PC-9 (cell line): ENCODE measurements at regions of chr10 and their contacts with region 1.

Region 1: GRCh38 chr10:29998142-29998808 is 61.1 kb downstream of the JCAD start:
- DNase-seq: peak; percentile 61 to 75
- H3K4me3 ChIP-seq: no peak overlapping the region
- H3K27ac ChIP-seq: no peak overlapping the region
- H3K4me1 ChIP-seq: peaks cover 42% of the 10 kb centered on the region
- H3K27me3 ChIP-seq: no peaks in the 10 kb centered on the region
- CTCF ChIP-seq: peak; percentile 92

Region 2: GRCh38 chr10:29735596-29736318 is 262.5 kb before region 1 on chr10:
- CTCF ChIA-PET with region 1: no interaction called
- POLR2A ChIA-PET with region 1: interaction called, 5 read pairs
- intact Hi-C with region 1: loop called (anchors 1 kb)
- DNase-seq: peak; percentile 64 to 97
- H3K4me3 ChIP-seq: peak overlapping the region; percentile 73
- H3K27ac ChIP-seq: peak overlapping the region; percentile 93
- H3K4me1 ChIP-seq: peaks cover 22% of the 10 kb centered on the region
- H3K27me3 ChIP-seq: no peaks in the 10 kb centered on the region
- CTCF ChIP-seq: peak; percentile 84

Region 3: DNA sequence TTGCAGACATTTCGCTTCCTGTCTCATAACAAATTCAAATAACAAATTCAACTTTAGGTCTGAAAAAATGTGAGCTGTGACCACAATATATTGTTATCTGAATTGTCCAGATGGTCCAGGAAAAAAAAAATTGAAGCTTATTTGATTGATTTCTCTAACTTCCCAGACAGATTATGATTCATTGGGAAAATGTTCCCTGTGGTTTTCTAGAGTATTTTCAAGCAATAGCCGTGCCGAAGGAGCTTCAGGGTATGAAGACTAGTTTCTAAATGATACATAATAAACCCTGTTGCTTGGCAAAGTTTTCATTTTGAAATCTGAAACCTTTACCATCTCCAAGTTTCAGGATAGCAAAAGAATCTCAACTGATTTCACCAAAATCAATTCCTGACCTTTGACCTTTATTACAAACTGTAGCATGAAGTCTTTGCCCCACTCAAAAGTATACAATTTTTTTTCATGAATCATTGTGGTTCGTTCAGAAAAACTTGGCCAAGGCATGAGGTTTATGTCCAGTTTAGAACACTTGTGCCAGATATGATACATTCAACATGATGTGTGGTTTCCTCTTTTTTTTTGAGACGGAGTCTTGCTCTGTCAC is 48.8 kb before region 1 on chr10:
- CTCF ChIA-PET with region 1: no interaction called
- POLR2A ChIA-PET with region 1: no interaction called
- intact Hi-C with region 1: loop called (anchors 2 kb)
- DNase-seq: peak; percentile 44 to 96
- H3K4me3 ChIP-seq: no peak overlapping the region
- H3K27ac ChIP-seq: peak overlapping the region; percentile 91
- H3K4me1 ChIP-seq: peaks cover 51% of the 10 kb centered on the region
- H3K27me3 ChIP-seq: no peaks in the 10 kb centered on the region
- CTCF ChIP-seq: no peak

Region 4: DNA sequence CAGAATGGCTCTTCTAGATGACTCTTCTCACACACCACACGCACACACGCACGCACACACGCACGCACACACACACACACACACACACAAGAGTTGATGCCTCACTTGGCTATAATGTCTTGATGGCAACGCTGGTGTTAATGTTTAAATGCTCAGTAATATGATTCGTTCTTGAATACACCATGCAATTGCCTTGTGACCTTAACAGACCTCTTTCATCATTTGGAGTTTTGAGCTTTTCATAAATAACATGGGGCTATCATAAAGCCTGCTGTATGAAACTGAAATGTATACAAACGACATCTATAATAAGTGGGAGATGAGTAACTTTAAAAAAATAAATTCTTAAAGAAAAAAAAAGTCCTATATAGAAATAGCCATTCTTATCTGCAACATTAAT is 52.9 kb after region 1 on chr10:
- CTCF ChIA-PET with region 1: no interaction called
- POLR2A ChIA-PET with region 1: no interaction called
- intact Hi-C with region 1: no loop called
- DNase-seq: no peak
- H3K4me3 ChIP-seq: no peak overlapping the region
- H3K27ac ChIP-seq: no peak overlapping the region
- H3K4me1 ChIP-seq: peaks cover 9% of the 10 kb centered on the region
- H3K27me3 ChIP-seq: no peaks in the 10 kb centered on the region
- CTCF ChIP-seq: no peak

Region 5: GRCh38 chr10:30241422-30242110 is 243.3 kb after region 1 on chr10:
- CTCF ChIA-PET with region 1: interaction called, 10 read pairs
- POLR2A ChIA-PET with region 1: interaction called, 3 read pairs
- intact Hi-C with region 1: loop called (anchors 1 kb)
- DNase-seq: no peak
- H3K4me3 ChIP-seq: no peak overlapping the region
- H3K27ac ChIP-seq: no peak overlapping the region
- H3K4me1 ChIP-seq: no peaks in the 10 kb centered on the region
- H3K27me3 ChIP-seq: no peaks in the 10 kb centered on the region
- CTCF ChIP-seq: no peak; the same call in 1 of the 2 replicates

Region 6: DNA sequence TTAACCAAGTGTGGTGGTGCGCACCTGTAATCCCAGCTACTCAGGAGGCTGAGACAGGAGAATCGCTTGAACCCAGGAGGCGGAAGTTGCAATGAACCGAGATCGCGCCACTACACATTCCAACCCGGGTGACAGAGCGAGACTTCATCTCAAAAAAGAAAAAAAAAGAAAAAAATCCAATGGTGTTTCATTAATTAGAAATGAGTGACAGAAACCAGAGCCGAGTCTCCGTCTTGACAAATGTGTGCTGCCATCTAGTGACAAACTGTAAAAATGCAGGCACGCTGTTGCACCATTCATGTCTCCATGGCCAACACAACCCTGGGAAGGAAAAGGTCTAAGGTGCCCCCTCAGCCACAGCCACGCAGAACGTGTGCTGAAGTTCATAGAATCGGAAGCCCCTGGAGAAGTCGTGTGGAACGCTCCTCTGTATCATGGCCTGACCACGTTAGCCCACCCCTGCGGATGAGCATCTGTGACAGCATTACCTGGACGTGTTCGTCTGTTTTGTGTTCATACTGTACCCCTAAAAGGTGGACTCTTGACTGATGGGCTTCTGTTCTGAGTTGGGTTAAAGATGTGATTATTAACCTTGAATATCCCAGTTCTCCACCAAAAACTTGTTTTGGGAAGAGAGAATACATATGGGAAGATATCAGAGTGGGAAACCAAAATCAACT is 536.3 kb after region 1 on chr10:
- CTCF ChIA-PET with region 1: no interaction called
- POLR2A ChIA-PET with region 1: no interaction called
- intact Hi-C with region 1: loop called (anchors 1 kb)
- DNase-seq: peak; percentile 46 to 60
- H3K4me3 ChIP-seq: no peak overlapping the region
- H3K27ac ChIP-seq: no peak overlapping the region
- H3K4me1 ChIP-seq: no peaks in the 10 kb centered on the region
- H3K27me3 ChIP-seq: no peaks in the 10 kb centered on the region
- CTCF ChIP-seq: peak; percentile 87